A549 (cell line): ENCODE measurements at regions of chr1 and their contacts with region 1.

Region 1: GRCh38 chr1:205300886-205301821 is 20.4 kb downstream of the NUAK2 start:
- DNase-seq: peak in 1 of 2 experiments; percentile 96
- ATAC-seq: peak; percentile 53 to 54
- H3K4me3 ChIP-seq: peak overlapping the region; percentile 8; the same call in 1 of the 3 replicates
- H3K27ac ChIP-seq: peak overlapping the region; percentile 98 to 99
- H3K4me1 ChIP-seq: peaks cover 94% of the 10 kb centered on the region
- CTCF ChIP-seq: no peak
- EP300 ChIP-seq: peak; percentile 95 to 99; a peak in 4 of 5 replicates
- POLR2A ChIP-seq: no peak
- RAD21 ChIP-seq: peak; percentile 32 to 62

Region 2: DNA sequence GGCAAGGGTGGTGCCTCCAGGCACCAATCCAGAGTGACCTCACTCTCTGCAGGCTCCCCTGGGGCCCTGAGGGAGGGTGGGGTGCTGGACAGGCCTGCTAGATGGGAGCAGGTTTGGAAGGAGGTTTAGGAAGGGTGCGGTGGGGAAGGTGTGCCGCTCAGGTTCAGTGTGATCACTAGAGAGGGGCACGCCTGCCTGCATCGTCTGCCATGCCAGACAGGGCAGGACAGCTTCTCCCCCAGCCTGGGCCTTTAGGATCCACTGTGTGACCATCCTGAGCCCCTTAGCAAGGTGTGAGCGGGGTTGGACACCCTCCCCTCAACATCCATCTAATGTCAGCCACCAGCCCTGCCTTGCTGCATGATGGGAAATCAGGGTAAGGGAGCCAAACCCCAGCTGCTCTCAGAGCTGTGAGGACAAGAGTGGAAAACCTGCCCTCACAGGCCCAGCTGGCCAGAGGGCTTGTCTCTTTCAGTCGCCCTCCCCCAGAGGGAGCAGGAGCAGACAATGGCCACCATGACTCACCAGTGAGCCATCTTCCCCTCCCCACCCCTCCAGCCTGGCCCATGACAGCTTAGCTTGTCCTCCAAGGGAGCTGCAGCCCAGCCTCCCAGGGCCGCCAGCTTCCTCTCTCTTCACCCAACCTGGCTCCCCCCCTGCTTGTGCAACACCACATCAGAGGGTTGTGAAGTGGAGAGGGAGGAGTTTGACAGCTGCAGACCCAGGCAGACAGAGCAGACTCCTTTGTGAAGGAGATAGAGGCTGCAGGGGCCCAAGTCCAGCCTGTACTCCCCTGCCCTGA is 16.6 kb before region 1 on chr1:
- CTCF ChIA-PET with region 1: interaction called, 3,627 read pairs
- POLR2A ChIA-PET with region 1: interaction called, 49 read pairs
- DNase-seq: peak; percentile 98 to 99
- ATAC-seq: peak; percentile 96 to 98
- H3K4me3 ChIP-seq: no peak overlapping the region
- H3K27ac ChIP-seq: peak overlapping the region; percentile 99 to 100
- H3K4me1 ChIP-seq: peaks cover 68% of the 10 kb centered on the region
- CTCF ChIP-seq: no peak
- EP300 ChIP-seq: peak; percentile 84 to 90; a peak in 4 of 5 replicates
- POLR2A ChIP-seq: no peak
- RAD21 ChIP-seq: peak; percentile 33 to 59; a peak in 4 of 5 replicates

Region 3: GRCh38 chr1:205313563-205314308 is 12.6 kb after region 1 on chr1:
- CTCF ChIA-PET with region 1: interaction called, 3,627 read pairs
- POLR2A ChIA-PET with region 1: interaction called, 14 read pairs
- DNase-seq: peak in 1 of 2 experiments; percentile 76
- ATAC-seq: peak; percentile 25 to 62; a peak in 4 of 6 replicates
- H3K4me3 ChIP-seq: peak overlapping the region; percentile 95
- H3K27ac ChIP-seq: peak overlapping the region; percentile 96 to 99
- H3K4me1 ChIP-seq: peaks cover 95% of the 10 kb centered on the region
- CTCF ChIP-seq: no peak
- EP300 ChIP-seq: no peak
- POLR2A ChIP-seq: no peak
- RAD21 ChIP-seq: no peak